ENCODE measurements at regions of chr1 and their contacts with region 1.

Region 1: DNA sequence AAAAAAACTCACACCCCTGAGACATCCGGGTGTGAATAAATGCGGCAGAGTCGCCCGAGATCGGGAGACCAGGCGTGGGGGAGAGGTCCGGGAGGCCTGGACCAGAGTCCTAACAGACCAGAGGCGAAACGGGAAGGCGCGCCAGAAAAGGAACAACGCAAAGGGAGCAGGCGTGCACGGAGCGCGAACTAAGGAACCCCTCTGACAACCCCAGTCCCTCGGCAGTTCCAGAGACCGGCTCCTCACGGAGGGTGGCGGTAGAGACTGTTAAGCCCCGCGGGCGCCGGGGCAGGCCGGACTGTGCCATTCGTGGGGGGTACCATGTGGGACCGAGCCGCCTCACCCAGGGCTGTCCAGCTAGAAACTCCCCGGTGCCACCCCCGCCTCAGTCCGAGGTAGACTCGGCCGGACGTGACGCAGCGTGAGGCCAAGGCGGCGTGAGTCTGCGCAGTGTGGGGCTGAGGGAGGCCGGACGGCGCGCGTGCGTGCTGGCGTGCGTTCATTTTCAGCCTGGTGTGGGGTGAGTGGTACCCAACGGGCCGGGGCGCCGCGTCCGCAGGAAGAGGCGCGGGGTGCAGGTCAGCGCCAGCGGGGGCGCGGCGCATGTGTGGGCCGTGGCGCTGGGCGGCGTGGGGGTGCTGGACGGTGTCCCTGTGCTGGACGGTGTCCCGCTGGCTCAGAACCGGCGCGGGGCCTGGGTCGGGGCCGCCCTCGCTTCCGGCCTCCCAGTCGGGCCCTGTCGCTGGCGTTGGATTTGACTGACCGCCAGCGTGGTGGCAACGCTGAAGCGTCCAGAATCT is at the start of gene PARK7:
- DNase-seq: peak; percentile 99
- H3K4me3 Mint-ChIP-seq: peak within 1 kb of the TSS; percentile 84
- H3K27ac Mint-ChIP-seq: peak within 1 kb of the TSS; percentile 30
- H3K4me1 Mint-ChIP-seq: peaks cover 11% of the 10 kb centered on the region
- H3K27me3 Mint-ChIP-seq: no peaks in the 10 kb centered on the region
- CTCF ChIP-seq: peak; percentile 19
- total RNA-seq, gene PARK7: 419 and 450 TPM in 2 replicates

Region 2: GRCh38 chr1:7942214-7942921 is 19.0 kb before region 1 on chr1:
- CTCF ChIA-PET with region 1: interaction called, 3 read pairs
- POLR2A ChIA-PET with region 1: interaction called, 10 read pairs
- intact Hi-C with region 1: no loop called
- DNase-seq: no peak
- H3K4me3 Mint-ChIP-seq: no peak overlapping the region
- H3K27ac Mint-ChIP-seq: no peak overlapping the region
- H3K4me1 Mint-ChIP-seq: peaks cover 30% of the 10 kb centered on the region
- H3K27me3 Mint-ChIP-seq: peaks cover 30% of the 10 kb centered on the region
- CTCF ChIP-seq: no peak

Region 3: GRCh38 chr1:7948960-7949359 is 12.5 kb before region 1 on chr1:
- CTCF ChIA-PET with region 1: interaction called, 3 read pairs
- POLR2A ChIA-PET with region 1: interaction called, 13 read pairs
- intact Hi-C with region 1: no loop called
- DNase-seq: peak; percentile 50
- H3K4me3 Mint-ChIP-seq: no peak overlapping the region
- H3K27ac Mint-ChIP-seq: no peak overlapping the region
- H3K4me1 Mint-ChIP-seq: peaks cover 8% of the 10 kb centered on the region
- H3K27me3 Mint-ChIP-seq: no peaks in the 10 kb centered on the region
- CTCF ChIP-seq: no peak

Region 4: DNA sequence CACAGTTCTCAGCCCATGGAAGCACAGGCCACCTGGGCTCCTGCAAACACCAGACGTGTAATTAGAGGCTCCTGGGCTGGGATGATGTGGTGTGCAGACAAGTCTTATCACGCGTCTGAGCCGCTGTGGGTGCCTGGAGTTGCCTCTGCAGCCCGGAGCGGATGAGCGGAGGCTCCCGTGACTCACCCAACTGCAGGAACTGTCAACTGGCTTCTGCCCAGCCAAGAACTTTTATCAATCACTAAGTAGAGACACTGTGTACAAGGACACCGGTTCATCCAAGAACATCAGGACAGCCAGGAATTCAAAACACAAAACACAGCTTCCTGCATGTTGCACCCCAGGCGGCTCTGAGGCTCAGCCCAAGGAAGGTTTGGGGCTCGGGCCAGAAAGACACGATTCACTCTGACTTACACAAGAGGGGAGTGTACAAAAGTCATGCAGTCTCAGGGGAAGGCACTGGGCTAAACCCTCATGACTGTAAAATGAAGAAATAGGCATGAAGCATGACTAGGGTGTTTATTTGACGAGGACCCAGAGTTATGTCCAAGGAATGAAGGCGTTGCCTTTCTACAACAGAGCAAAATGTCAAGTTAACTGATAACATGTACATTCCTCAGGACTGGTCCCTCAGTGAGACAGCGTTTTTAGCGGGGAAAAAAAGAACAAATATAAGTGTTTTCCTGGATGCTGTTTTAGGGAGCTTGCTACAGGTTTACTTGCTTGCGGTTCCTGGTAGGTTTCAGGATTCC is 43.6 kb after region 1 on chr1:
- CTCF ChIA-PET with region 1: no interaction called
- POLR2A ChIA-PET with region 1: interaction called, 18 read pairs
- intact Hi-C with region 1: no loop called
- DNase-seq: peak; percentile 99
- H3K4me3 Mint-ChIP-seq: peak overlapping the region; percentile 57
- H3K27ac Mint-ChIP-seq: peak overlapping the region; percentile 84
- H3K4me1 Mint-ChIP-seq: peaks cover 38% of the 10 kb centered on the region
- H3K27me3 Mint-ChIP-seq: no peaks in the 10 kb centered on the region
- CTCF ChIP-seq: no peak

Region 5: GRCh38 chr1:8329439-8329838 is 368.0 kb after region 1 on chr1:
- CTCF ChIA-PET with region 1: no interaction called
- POLR2A ChIA-PET with region 1: no interaction called
- intact Hi-C with region 1: no loop called
- DNase-seq: no peak
- H3K4me3 Mint-ChIP-seq: no peak overlapping the region
- H3K27ac Mint-ChIP-seq: no peak overlapping the region
- H3K4me1 Mint-ChIP-seq: no peaks in the 10 kb centered on the region
- H3K27me3 Mint-ChIP-seq: no peaks in the 10 kb centered on the region
- CTCF ChIP-seq: no peak